CD8-positive, alpha-beta T cell (primary cell): ENCODE measurements at regions of chr4 and their contacts with region 1.

Region 1: DNA sequence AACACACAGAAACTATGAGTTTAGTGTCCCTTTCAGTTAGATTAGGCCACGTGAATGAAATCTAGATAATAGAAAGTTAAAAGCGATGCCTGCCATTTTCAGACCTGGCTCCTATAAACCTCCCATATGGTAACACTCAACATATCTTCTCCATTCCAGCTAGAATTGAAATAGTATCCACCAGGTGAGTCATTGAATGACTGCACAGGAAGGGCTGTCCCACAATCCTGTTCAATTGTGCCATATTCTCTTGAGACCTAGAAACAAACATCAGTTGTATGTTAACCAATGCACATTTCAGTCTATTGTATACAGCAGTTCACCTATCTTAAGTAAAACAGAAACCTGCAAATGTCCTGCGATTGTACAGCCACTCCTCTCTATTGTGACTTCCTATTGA is 659.3 kb upstream of the SLIT2 start:
- DNase-seq: no peak
- ATAC-seq: no peak
- H3K4me3 ChIP-seq: no peak overlapping the region
- H3K4me3 Mint-ChIP-seq: no peak overlapping the region
- H3K27ac ChIP-seq: no peak overlapping the region
- H3K27ac Mint-ChIP-seq: no peak overlapping the region
- H3K4me1 ChIP-seq: no peaks in the 10 kb centered on the region
- H3K4me1 Mint-ChIP-seq: no peaks in the 10 kb centered on the region
- H3K27me3 ChIP-seq: no peaks in the 10 kb centered on the region
- H3K27me3 Mint-ChIP-seq: no peaks in the 10 kb centered on the region
- CTCF ChIP-seq: no peak

Region 2: GRCh38 chr4:18767921-18768320 is 824.5 kb before region 1 on chr4:
- CTCF ChIA-PET with region 1: no interaction called
- POLR2A ChIA-PET with region 1: no interaction called
- intact Hi-C with region 1: no loop called
- DNase-seq: no peak
- ATAC-seq: no peak
- H3K4me3 ChIP-seq: no peak overlapping the region
- H3K4me3 Mint-ChIP-seq: no peak overlapping the region
- H3K27ac ChIP-seq: no peak overlapping the region
- H3K27ac Mint-ChIP-seq: no peak overlapping the region
- H3K4me1 ChIP-seq: no peaks in the 10 kb centered on the region
- H3K4me1 Mint-ChIP-seq: no peaks in the 10 kb centered on the region
- H3K27me3 ChIP-seq: no peaks in the 10 kb centered on the region
- H3K27me3 Mint-ChIP-seq: no peaks in the 10 kb centered on the region
- CTCF ChIP-seq: no peak

Region 3: GRCh38 chr4:20868108-20868507 is 1275.7 kb after region 1 on chr4:
- CTCF ChIA-PET with region 1: no interaction called
- POLR2A ChIA-PET with region 1: no interaction called
- intact Hi-C with region 1: loop called in 1 of 2 experiments (anchors 10 kb)
- DNase-seq: no peak
- ATAC-seq: no peak
- H3K4me3 ChIP-seq: no peak overlapping the region
- H3K4me3 Mint-ChIP-seq: no peak overlapping the region
- H3K27ac ChIP-seq: no peak overlapping the region
- H3K27ac Mint-ChIP-seq: no peak overlapping the region
- H3K4me1 ChIP-seq: no peaks in the 10 kb centered on the region
- H3K4me1 Mint-ChIP-seq: peaks cover 2% of the 10 kb centered on the region
- H3K27me3 ChIP-seq: no peaks in the 10 kb centered on the region
- H3K27me3 Mint-ChIP-seq: no peaks in the 10 kb centered on the region
- CTCF ChIP-seq: no peak